GM12878 (cell line): ENCODE measurements at regions of chr6 and their contacts with region 1.

Region 1: GRCh38 chr6:158220786-158221442 is 52.8 kb downstream of the GTF2H5 start:
- DNase-seq: no peak
- ATAC-seq: peak; percentile 100
- H3K4me3 ChIP-seq: no peak overlapping the region
- H3K27ac ChIP-seq: no peak overlapping the region
- H3K4me1 ChIP-seq: no peaks in the 10 kb centered on the region
- H3K27me3 ChIP-seq: no peaks in the 10 kb centered on the region
- CTCF ChIP-seq: peak; percentile 85 to 95 (median 93); a peak in 5 of 6 replicates
- EP300 ChIP-seq: no peak
- POLR2A ChIP-seq: no peak
- RAD21 ChIP-seq: peak; percentile 100

Region 2: DNA sequence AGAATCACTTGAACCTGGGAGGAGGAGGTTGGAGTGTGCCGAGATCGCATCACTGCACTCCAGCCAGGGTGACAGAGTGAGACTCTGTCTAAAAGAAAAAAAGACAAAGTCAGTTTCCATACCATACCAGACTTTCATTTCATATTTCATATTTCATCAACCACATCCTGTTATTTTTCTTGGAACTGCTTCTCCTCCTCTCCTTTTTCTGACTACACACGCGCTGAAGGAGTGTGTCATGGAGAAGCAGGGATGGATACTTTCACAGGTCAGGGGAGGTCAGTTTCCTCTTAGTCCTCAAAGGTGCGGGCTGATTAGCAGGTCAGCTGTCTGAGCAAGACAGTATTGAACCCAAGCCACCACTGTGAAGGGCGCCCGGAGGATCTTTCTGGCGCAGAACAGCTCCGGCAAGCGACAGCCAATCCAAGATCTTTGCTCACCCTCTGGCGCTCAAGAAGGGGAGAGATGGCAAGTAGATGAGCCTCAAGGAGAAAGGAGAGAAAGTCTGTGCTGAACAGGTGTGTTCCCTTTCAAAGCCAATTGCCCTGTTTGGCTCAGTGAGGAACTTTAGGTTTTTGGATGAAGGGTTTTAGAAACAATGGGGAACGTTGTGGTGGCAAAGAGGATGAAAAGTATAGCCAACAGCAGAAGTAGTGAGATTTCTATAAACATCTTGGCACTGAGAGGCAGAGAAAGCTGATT is 258.2 kb before region 1 on chr6:
- CTCF ChIA-PET with region 1: no interaction called
- POLR2A ChIA-PET with region 1: no interaction called
- RAD21 ChIA-PET with region 1: no interaction called
- SMC1A ChIA-PET with region 1: no interaction called
- in situ Hi-C with region 1: no loop called
- intact Hi-C with region 1: no loop called
- DNase-seq: no peak
- ATAC-seq: no peak
- H3K4me3 ChIP-seq: no peak overlapping the region
- H3K27ac ChIP-seq: no peak overlapping the region
- H3K4me1 ChIP-seq: no peaks in the 10 kb centered on the region
- H3K27me3 ChIP-seq: no peaks in the 10 kb centered on the region
- CTCF ChIP-seq: no peak
- EP300 ChIP-seq: no peak
- POLR2A ChIP-seq: no peak
- RAD21 ChIP-seq: no peak

Region 3: GRCh38 chr6:158188591-158188990 is 32.3 kb before region 1 on chr6:
- CTCF ChIA-PET with region 1: no interaction called
- POLR2A ChIA-PET with region 1: no interaction called
- RAD21 ChIA-PET with region 1: no interaction called
- SMC1A ChIA-PET with region 1: no interaction called
- in situ Hi-C with region 1: no loop called
- intact Hi-C with region 1: no loop called
- DNase-seq: no peak
- ATAC-seq: no peak
- H3K4me3 ChIP-seq: no peak overlapping the region
- H3K27ac ChIP-seq: no peak overlapping the region
- H3K4me1 ChIP-seq: no peaks in the 10 kb centered on the region
- H3K27me3 ChIP-seq: no peaks in the 10 kb centered on the region
- CTCF ChIP-seq: no peak
- EP300 ChIP-seq: no peak
- POLR2A ChIP-seq: no peak
- RAD21 ChIP-seq: no peak

Region 4: DNA sequence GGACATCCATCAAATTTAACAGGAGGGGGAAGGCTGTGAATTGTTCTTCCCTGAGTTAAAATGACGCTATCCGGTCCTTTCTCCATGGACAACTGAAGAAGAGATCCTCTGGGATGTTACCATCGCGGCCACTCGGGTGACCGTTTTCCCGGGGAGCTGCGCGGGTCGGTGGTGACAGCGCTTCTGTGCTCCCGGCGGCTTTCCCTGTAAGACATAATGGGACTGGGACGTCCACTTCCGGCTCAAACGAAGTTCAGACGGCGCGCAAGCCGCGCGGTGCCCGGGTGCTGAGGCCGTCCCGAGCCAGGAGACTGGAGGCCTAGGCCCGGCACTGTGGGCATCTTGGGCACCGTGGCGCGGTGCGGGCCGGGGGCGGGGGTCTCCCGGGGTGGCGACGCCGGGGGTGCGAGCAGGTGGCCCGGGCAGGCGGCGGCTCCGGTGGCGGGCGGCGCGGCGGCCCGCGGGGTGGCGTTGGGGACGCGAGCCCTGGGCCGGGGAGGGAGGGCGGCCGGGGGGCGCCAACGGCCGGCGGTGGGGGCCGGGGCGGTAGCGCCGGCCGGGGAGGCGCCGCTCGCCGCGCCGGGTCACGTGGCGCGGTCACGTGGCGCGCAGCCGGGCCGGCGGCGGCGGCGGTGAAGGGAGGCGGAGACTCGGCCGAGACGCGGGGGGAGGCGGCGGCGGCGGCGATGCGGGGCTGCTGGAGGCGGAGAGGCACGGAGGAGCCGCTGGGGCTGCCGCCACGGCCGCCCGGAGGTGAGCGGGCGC is 10.8 kb after region 1 on chr6:
- CTCF ChIA-PET with region 1: interaction called, 10 read pairs
- POLR2A ChIA-PET with region 1: no interaction called
- RAD21 ChIA-PET with region 1: interaction called, 3 read pairs
- SMC1A ChIA-PET with region 1: interaction called, 7 read pairs
- in situ Hi-C with region 1: no loop called
- intact Hi-C with region 1: no loop called
- DNase-seq: no peak
- ATAC-seq: peak; percentile 58
- H3K4me3 ChIP-seq: peak overlapping the region; percentile 84
- H3K27ac ChIP-seq: peak overlapping the region; percentile 68
- H3K4me1 ChIP-seq: peaks cover 11% of the 10 kb centered on the region
- H3K27me3 ChIP-seq: no peaks in the 10 kb centered on the region
- CTCF ChIP-seq: no peak
- EP300 ChIP-seq: no peak
- POLR2A ChIP-seq: peak; percentile 70
- RAD21 ChIP-seq: no peak

Region 5: DNA sequence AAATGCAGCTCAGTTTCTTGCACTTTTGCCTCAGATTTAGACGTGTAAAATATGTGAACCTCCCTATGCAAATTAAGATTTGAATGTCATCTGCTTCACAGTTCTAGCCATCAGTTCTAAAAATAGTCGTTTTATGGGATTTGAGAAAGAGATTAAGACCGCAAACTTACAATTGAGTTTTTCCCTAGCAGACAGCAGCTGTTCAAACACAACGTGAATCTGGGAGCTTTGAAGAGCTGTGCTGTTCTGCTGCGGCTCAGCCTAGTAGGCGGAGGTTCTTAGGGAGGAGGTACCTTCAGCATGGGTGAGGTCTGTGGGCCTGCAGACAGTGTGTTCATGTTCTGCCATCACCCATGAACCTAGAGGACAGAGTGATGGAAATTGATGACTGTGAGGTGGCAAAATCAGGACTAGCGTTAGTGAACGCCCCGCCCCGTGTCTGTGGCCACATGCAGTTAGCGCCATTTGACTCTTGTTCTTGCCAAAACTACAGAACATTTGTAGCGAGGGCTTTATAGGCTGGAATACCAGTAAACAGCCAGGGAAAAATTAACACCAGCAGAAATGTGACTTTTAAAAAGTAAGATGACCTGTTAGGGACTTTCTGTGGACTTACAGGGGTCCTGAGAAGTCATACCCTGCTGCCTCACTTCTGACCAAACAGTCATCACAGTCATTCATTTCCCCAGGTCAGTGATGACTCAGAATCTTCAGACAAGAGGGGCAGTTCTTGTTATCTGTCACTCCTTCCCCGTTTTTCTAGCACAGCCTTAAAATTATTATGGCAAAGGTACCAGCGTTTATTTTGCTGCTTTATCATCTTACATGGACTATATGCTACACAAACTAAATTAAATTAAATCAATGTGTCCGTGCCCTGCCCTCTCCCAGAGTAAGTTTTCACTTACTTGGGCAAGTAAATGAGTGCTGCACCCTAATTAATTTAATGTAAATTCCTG is 254.7 kb after region 1 on chr6:
- CTCF ChIA-PET with region 1: interaction called, 7 read pairs
- POLR2A ChIA-PET with region 1: no interaction called
- RAD21 ChIA-PET with region 1: interaction called, 6 read pairs
- SMC1A ChIA-PET with region 1: interaction called, 4 read pairs
- in situ Hi-C with region 1: no loop called
- intact Hi-C with region 1: loop called (anchors 5 kb)
- DNase-seq: peak; percentile 88
- ATAC-seq: peak; percentile 90
- H3K4me3 ChIP-seq: peak overlapping the region; percentile 55
- H3K27ac ChIP-seq: peak overlapping the region; percentile 81
- H3K4me1 ChIP-seq: peaks cover 31% of the 10 kb centered on the region
- H3K27me3 ChIP-seq: no peaks in the 10 kb centered on the region
- CTCF ChIP-seq: no peak
- EP300 ChIP-seq: peak; percentile 79 to 94
- POLR2A ChIP-seq: peak; percentile 79
- RAD21 ChIP-seq: no peak

Region 6: GRCh38 chr6:158518191-158519127 is 297.5 kb after region 1 on chr6:
- CTCF ChIA-PET with region 1: interaction called, 41 read pairs
- POLR2A ChIA-PET with region 1: no interaction called
- RAD21 ChIA-PET with region 1: interaction called, 46 read pairs
- SMC1A ChIA-PET with region 1: interaction called, 25 read pairs
- in situ Hi-C with region 1: loop called (anchors 5 kb)
- intact Hi-C with region 1: loop called (anchors 1 kb)
- DNase-seq: peak; percentile 71
- ATAC-seq: peak; percentile 89
- H3K4me3 ChIP-seq: peak overlapping the region; percentile 54; the same call in 1 of the 2 replicates
- H3K27ac ChIP-seq: peak overlapping the region; percentile 10
- H3K4me1 ChIP-seq: peaks cover 13% of the 10 kb centered on the region
- H3K27me3 ChIP-seq: no peaks in the 10 kb centered on the region
- CTCF ChIP-seq: peak; percentile 64 to 69 (median 69)
- EP300 ChIP-seq: 0 out of 4 replicates have a peak, but pooled peaks of 1 of the 2 experiments have one; percentile 13
- POLR2A ChIP-seq: no peak
- RAD21 ChIP-seq: peak; percentile 83

Region 7: GRCh38 chr6:158559895-158560835 is 339.3 kb after region 1 on chr6 and contains the start of gene TMEM181:
- CTCF ChIA-PET with region 1: interaction called, 22 read pairs
- POLR2A ChIA-PET with region 1: no interaction called
- RAD21 ChIA-PET with region 1: interaction called, 3 read pairs
- SMC1A ChIA-PET with region 1: interaction called, 5 read pairs
- in situ Hi-C with region 1: no loop called
- intact Hi-C with region 1: no loop called
- DNase-seq: peak; percentile 32
- ATAC-seq: peak; percentile 89
- H3K4me3 ChIP-seq: peak within 1 kb of the TSS; percentile 79
- H3K27ac ChIP-seq: peak within 1 kb of the TSS; percentile 69
- H3K4me1 ChIP-seq: peaks cover 12% of the 10 kb centered on the region
- H3K27me3 ChIP-seq: no peaks in the 10 kb centered on the region
- CTCF ChIP-seq: no peak
- EP300 ChIP-seq: no peak
- POLR2A ChIP-seq: peak; percentile 88
- RAD21 ChIP-seq: no peak
- polyA plus RNA-seq, gene TMEM181: 1.5 to 2.3 TPM

Region 8: GRCh38 chr6:158605266-158605878 is 384.5 kb after region 1 on chr6:
- CTCF ChIA-PET with region 1: interaction called, 88 read pairs
- POLR2A ChIA-PET with region 1: no interaction called
- RAD21 ChIA-PET with region 1: interaction called, 35 read pairs
- SMC1A ChIA-PET with region 1: interaction called, 36 read pairs
- in situ Hi-C with region 1: loop called (anchors 5 kb)
- intact Hi-C with region 1: loop called (anchors 1 kb)
- DNase-seq: peak; percentile 36
- ATAC-seq: peak; percentile 90
- H3K4me3 ChIP-seq: no peak overlapping the region
- H3K27ac ChIP-seq: no peak overlapping the region
- H3K4me1 ChIP-seq: no peaks in the 10 kb centered on the region
- H3K27me3 ChIP-seq: no peaks in the 10 kb centered on the region
- CTCF ChIP-seq: peak; percentile 68 to 84 (median 74); a peak in 5 of 6 replicates
- EP300 ChIP-seq: no peak
- POLR2A ChIP-seq: no peak
- RAD21 ChIP-seq: peak; percentile 72

Region 9: DNA sequence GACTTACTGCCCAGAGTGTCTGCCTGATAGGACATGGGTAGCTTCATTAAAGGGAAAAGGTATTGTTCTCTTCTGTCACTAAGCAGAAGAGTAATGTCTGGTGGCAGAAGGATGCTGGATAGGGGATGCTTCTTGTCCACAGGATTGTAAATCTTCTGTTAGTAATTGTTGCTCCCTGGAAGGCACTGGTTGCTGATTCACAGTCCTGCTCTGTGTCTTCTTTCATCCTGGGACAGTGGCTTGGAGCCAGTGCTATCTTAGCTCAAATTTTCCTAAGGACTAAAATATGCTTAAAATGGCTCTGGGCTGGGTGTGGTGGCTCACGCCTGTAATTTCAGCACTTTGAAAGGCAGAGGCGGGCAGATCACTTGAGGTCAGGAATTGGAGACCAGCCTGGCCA is 476.9 kb after region 1 on chr6:
- CTCF ChIA-PET with region 1: interaction called, 13 read pairs
- POLR2A ChIA-PET with region 1: interaction called, 3 read pairs
- RAD21 ChIA-PET with region 1: interaction called, 3 read pairs
- SMC1A ChIA-PET with region 1: interaction called, 10 read pairs
- in situ Hi-C with region 1: no loop called
- intact Hi-C with region 1: no loop called
- DNase-seq: no peak
- ATAC-seq: no peak
- H3K4me3 ChIP-seq: no peak overlapping the region
- H3K27ac ChIP-seq: no peak overlapping the region
- H3K4me1 ChIP-seq: no peaks in the 10 kb centered on the region
- H3K27me3 ChIP-seq: no peaks in the 10 kb centered on the region
- CTCF ChIP-seq: no peak
- EP300 ChIP-seq: no peak
- POLR2A ChIP-seq: no peak
- RAD21 ChIP-seq: no peak